ENCODE measurements at regions of chr4 and their contacts with region 1.

Region 1: GRCh38 chr4:56424697-56425514 is 10.5 kb downstream of the PPAT start:
- DNase-seq: peak in 4 of 5 donors; percentile 45 to 54 (median 48)
- H3K4me3 ChIP-seq: no peak overlapping the region
- H3K4me3 Mint-ChIP-seq: no peak overlapping the region
- H3K27ac ChIP-seq: no peak overlapping the region
- H3K27ac Mint-ChIP-seq: no peak overlapping the region
- H3K4me1 ChIP-seq: no peaks in the 10 kb centered on the region
- H3K4me1 Mint-ChIP-seq: peaks cover 0 to 7% (median 4%) of the 10 kb centered on the region in 4 donors
- H3K27me3 ChIP-seq: no peaks in the 10 kb centered on the region
- H3K27me3 Mint-ChIP-seq: no peaks in the 10 kb centered on the region

Region 2: GRCh38 chr4:55706541-55706940 is 718.4 kb before region 1 on chr4:
- CTCF ChIA-PET with region 1: no interaction called
- POLR2A ChIA-PET with region 1: no interaction called
- intact Hi-C with region 1: no loop called
- DNase-seq: no peak
- H3K4me3 ChIP-seq: no peak overlapping the region
- H3K4me3 Mint-ChIP-seq: no peak overlapping the region
- H3K27ac ChIP-seq: no peak overlapping the region
- H3K27ac Mint-ChIP-seq: no peak overlapping the region
- H3K4me1 ChIP-seq: no peaks in the 10 kb centered on the region
- H3K4me1 Mint-ChIP-seq: peaks cover 0 to 10% (median under 1%) of the 10 kb centered on the region in 4 donors
- H3K27me3 ChIP-seq: no peaks in the 10 kb centered on the region
- H3K27me3 Mint-ChIP-seq: peaks cover 8 to 9% of the 10 kb centered on the region in 2 donors

Region 3: GRCh38 chr4:56038487-56039148 is 386.3 kb before region 1 on chr4:
- CTCF ChIA-PET with region 1: no interaction called
- POLR2A ChIA-PET with region 1: no interaction called
- intact Hi-C with region 1: no loop called
- DNase-seq: no peak
- H3K4me3 ChIP-seq: no peak overlapping the region
- H3K4me3 Mint-ChIP-seq: no peak overlapping the region
- H3K27ac ChIP-seq: no peak overlapping the region
- H3K27ac Mint-ChIP-seq: no peak overlapping the region
- H3K4me1 ChIP-seq: no peaks in the 10 kb centered on the region
- H3K4me1 Mint-ChIP-seq: no peaks in the 10 kb centered on the region
- H3K27me3 ChIP-seq: no peaks in the 10 kb centered on the region
- H3K27me3 Mint-ChIP-seq: peaks cover 5 to 7% of the 10 kb centered on the region in 2 donors

Region 4: DNA sequence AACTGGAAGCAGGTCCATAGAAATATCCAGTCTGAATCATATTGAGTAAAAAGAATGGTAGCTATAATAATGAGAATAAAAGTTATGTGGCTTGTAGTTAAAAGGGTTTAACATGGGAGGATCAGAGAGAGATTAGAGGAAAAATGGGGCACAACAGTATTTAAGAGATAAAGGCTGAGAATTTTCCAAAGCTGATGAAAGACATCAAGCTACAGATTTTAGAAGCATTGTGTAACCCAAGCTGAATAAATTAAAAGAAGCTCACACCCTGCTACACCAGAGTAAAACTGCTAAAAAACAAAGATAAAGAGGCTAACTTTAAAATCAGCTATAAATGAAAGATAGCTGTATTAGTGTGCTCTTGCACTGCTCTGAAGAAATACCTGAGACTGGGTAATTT is 131.8 kb before region 1 on chr4:
- CTCF ChIA-PET with region 1: no interaction called
- POLR2A ChIA-PET with region 1: no interaction called
- intact Hi-C with region 1: no loop called
- DNase-seq: no peak
- H3K4me3 ChIP-seq: no peak overlapping the region
- H3K4me3 Mint-ChIP-seq: no peak overlapping the region
- H3K27ac ChIP-seq: no peak overlapping the region
- H3K27ac Mint-ChIP-seq: no peak overlapping the region
- H3K4me1 ChIP-seq: peaks cover 6% of the 10 kb centered on the region
- H3K4me1 Mint-ChIP-seq: peaks cover 9 to 16% (median 12%) of the 10 kb centered on the region in 4 donors
- H3K27me3 ChIP-seq: no peaks in the 10 kb centered on the region
- H3K27me3 Mint-ChIP-seq: no peaks in the 10 kb centered on the region

Region 5: GRCh38 chr4:56405016-56405415 is 19.9 kb before region 1 on chr4:
- CTCF ChIA-PET with region 1: interaction called, 12 read pairs
- POLR2A ChIA-PET with region 1: no interaction called
- intact Hi-C with region 1: no loop called
- DNase-seq: no peak
- H3K4me3 ChIP-seq: no peak overlapping the region
- H3K4me3 Mint-ChIP-seq: no peak overlapping the region
- H3K27ac ChIP-seq: no peak overlapping the region
- H3K27ac Mint-ChIP-seq: no peak overlapping the region
- H3K4me1 ChIP-seq: no peaks in the 10 kb centered on the region
- H3K4me1 Mint-ChIP-seq: peaks cover 0 to 2% (median 0%) of the 10 kb centered on the region in 4 donors
- H3K27me3 ChIP-seq: no peaks in the 10 kb centered on the region
- H3K27me3 Mint-ChIP-seq: no peaks in the 10 kb centered on the region

Region 6: DNA sequence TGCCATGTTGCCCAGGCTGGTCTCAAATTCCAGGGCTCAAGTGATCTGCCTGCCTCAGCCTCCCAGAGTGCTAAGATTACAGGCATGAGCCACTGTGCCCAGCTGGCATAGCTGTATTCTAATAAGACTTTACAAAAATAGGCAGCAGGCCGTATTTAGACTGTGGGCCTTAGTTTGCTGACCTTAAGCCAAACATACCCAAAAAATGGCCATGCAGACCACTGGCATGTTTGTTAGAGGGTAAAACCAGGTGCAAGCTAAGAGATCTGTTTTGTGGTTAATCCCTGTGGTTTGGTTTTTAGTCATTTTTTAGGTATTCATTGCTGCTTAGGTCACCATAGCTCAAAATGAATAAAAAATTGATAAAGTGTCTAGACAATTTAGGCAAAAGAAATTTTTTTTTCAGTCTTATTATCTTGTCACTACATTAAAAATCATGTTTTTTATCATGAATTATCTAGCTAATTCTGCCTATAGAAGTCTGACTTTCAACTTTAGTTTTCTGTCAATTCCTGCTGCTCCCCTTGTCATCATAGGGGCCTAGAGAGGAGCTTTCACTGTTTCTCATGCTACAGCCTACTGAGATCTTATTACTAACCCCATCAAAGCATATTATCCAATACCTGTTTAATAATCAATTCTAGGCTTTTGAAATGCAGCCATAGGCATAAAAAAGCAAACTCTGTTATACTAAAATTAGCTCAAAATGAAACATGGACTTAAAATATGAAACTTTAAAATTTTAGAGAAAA is 404.1 kb after region 1 on chr4:
- CTCF ChIA-PET with region 1: interaction called, 89 read pairs
- POLR2A ChIA-PET with region 1: no interaction called
- intact Hi-C with region 1: no loop called
- DNase-seq: no peak
- H3K4me3 ChIP-seq: no peak overlapping the region
- H3K4me3 Mint-ChIP-seq: no peak overlapping the region
- H3K27ac ChIP-seq: no peak overlapping the region
- H3K27ac Mint-ChIP-seq: no peak overlapping the region
- H3K4me1 ChIP-seq: no peaks in the 10 kb centered on the region
- H3K4me1 Mint-ChIP-seq: no peaks in the 10 kb centered on the region
- H3K27me3 ChIP-seq: no peaks in the 10 kb centered on the region
- H3K27me3 Mint-ChIP-seq: no peaks in the 10 kb centered on the region